ENCODE measurements at regions of chr20 and their contacts with region 1.

Region 1: GRCh38 chr20:36645998-36646397 is at the start of gene SLA2:
- DNase-seq: peak; percentile 84
- ATAC-seq: peak; percentile 63
- H3K4me3 Mint-ChIP-seq: peak within 1 kb of the TSS; percentile 82
- H3K27ac Mint-ChIP-seq: peak within 1 kb of the TSS; percentile 98
- H3K4me1 Mint-ChIP-seq: peaks cover 35% of the 10 kb centered on the region
- H3K27me3 Mint-ChIP-seq: no peaks in the 10 kb centered on the region
- CTCF ChIP-seq: no peak
- total RNA-seq, gene SLA2: 51.5 to 53.5 TPM

Region 2: GRCh38 chr20:36591854-36592641 is 54.0 kb before region 1 on chr20:
- CTCF ChIA-PET with region 1: no interaction called
- POLR2A ChIA-PET with region 1: interaction called, 19 read pairs
- intact Hi-C with region 1: no loop called
- DNase-seq: peak; percentile 85
- ATAC-seq: peak; percentile 65
- H3K4me3 Mint-ChIP-seq: peak overlapping the region; percentile 15
- H3K27ac Mint-ChIP-seq: peak overlapping the region; percentile 92
- H3K4me1 Mint-ChIP-seq: peaks cover 65% of the 10 kb centered on the region
- H3K27me3 Mint-ChIP-seq: no peaks in the 10 kb centered on the region
- CTCF ChIP-seq: no peak

Region 3: DNA sequence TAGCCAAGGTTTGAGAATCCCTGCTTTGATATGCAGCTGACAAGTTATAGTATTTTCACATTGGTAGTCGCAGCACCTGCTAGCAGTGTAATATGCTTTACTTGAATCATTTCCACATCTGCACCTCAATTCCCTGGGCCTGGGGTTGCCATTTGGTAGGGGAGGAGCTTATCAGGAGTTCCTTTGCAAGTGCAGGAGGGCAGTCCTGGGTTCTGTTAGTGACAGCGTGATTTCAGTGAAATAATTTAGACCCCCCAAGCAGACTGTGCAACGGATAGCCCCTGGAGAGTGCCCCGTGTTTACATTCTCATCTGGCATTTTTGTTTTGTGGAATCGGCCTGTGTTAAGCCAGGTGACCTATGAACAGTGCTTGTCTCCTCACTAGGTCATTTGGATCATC is 34.4 kb before region 1 on chr20:
- CTCF ChIA-PET with region 1: interaction called, 30 read pairs
- POLR2A ChIA-PET with region 1: interaction called, 21 read pairs
- intact Hi-C with region 1: no loop called
- DNase-seq: no peak
- ATAC-seq: no peak
- H3K4me3 Mint-ChIP-seq: no peak overlapping the region
- H3K27ac Mint-ChIP-seq: no peak overlapping the region
- H3K4me1 Mint-ChIP-seq: peaks cover 32% of the 10 kb centered on the region
- H3K27me3 Mint-ChIP-seq: no peaks in the 10 kb centered on the region
- CTCF ChIP-seq: no peak

Region 4: DNA sequence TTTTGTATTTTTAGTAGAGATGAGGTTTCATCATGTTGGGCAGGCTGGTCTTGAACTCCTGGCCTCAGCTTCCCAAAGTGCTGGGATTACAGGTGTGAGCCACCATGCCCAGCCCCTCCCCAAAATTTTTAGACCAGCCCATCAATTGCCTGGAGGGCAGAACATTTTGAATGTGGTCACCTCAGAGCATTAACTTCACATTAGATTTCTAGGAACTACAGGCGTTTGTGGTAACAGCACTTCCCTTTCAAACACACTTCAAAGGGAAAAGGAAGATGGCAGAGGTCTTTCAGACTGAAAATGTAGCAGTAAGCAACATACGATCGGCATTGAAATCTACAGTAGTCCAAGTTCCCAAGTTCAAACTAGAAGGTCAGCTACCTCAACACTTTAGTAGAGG is 12.3 kb after region 1 on chr20:
- CTCF ChIA-PET with region 1: interaction called, 5 read pairs
- POLR2A ChIA-PET with region 1: interaction called, 37 read pairs
- intact Hi-C with region 1: no loop called
- DNase-seq: peak; percentile 31
- ATAC-seq: peak; percentile 74
- H3K4me3 Mint-ChIP-seq: peak overlapping the region; percentile 28
- H3K27ac Mint-ChIP-seq: peak overlapping the region; percentile 54
- H3K4me1 Mint-ChIP-seq: peaks cover 12% of the 10 kb centered on the region
- H3K27me3 Mint-ChIP-seq: no peaks in the 10 kb centered on the region
- CTCF ChIP-seq: no peak